SK-N-SH (cell line): ENCODE measurements at regions of chr22 and their contacts with region 1.

Region 1: DNA sequence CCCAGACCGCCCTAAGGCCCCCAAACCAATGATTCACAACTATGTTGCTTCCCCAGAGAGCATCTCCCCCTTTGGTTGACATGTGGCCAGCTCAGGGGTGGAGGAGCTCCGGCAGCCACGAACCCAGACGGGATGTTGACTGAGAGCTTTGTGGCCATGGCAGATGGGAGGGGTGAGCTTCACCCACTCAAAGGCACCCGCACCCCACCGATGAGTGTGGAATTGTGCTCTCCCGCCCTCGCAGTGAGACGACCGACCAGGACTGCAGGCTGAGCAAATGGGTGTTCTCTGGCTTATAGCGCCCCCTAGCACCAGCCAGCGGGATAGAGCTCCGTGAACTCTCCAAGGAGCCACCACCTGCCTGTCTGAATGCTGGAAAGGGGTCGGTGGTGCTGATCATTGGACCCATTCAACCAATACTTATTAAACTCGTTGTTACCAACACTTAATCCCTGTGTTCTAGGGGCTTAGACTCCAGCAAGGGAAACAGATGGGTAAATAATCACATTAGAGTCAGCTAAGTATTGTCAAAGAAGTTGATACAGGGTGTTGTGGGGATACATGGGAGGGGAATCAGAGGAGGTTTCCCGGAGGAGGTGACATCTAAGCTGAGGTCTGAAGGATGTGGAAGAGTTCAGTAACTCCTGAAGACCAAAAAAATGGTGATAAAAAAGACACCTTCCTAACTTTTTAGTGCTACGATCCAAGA is 4.5 kb upstream of the TIMP3 start:
- DNase-seq: peak; percentile 76
- H3K4me3 ChIP-seq: peak overlapping the region in 1 of 2 experiments; percentile 11; a peak in 1 of 4 replicates
- H3K27ac ChIP-seq: no peak overlapping the region
- H3K4me1 ChIP-seq: peaks cover 0 to 8% of the 10 kb centered on the region in 2 experiments; a peak in 1 of 4 replicates
- H3K27me3 ChIP-seq: no peaks in the 10 kb centered on the region
- CTCF ChIP-seq: peak; percentile 87
- EP300 ChIP-seq: no peak
- RAD21 ChIP-seq: peak; percentile 79

Region 2: GRCh38 chr22:32775957-32776356 is 21.1 kb before region 1 on chr22:
- CTCF ChIA-PET with region 1: interaction called, 36 read pairs
- POLR2A ChIA-PET with region 1: no interaction called
- DNase-seq: peak; percentile 43
- H3K4me3 ChIP-seq: no peak overlapping the region
- H3K27ac ChIP-seq: no peak overlapping the region
- H3K4me1 ChIP-seq: no peaks in the 10 kb centered on the region; a peak in 1 of 4 replicates
- H3K27me3 ChIP-seq: no peaks in the 10 kb centered on the region
- CTCF ChIP-seq: peak; percentile 32; the same call in 1 of the 2 replicates
- EP300 ChIP-seq: no peak
- RAD21 ChIP-seq: peak; percentile 56

Region 3: DNA sequence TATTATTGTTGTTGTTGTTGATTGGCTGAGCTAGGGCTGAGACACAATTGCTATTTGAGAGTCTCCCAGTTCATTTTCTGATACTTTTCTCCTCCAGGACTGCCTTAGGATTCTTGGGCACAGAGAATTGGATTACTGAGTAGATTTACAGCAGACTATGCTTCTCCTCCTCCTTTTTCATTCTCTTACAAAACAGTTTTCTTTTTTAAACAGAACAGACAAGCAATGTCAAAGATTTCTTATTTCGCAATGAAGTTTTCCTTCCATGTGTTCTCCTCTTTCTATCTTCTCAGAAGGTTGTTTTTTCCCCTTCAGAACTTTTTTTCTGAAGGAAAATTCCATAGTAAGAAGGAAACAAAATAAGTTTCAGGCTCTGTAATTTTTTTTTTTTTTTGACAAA is 15.3 kb before region 1 on chr22:
- CTCF ChIA-PET with region 1: interaction called, 36 read pairs
- POLR2A ChIA-PET with region 1: no interaction called
- DNase-seq: no peak
- H3K4me3 ChIP-seq: no peak overlapping the region
- H3K27ac ChIP-seq: no peak overlapping the region
- H3K4me1 ChIP-seq: peaks cover 0 to 4% of the 10 kb centered on the region in 2 experiments; a peak in 1 of 4 replicates
- H3K27me3 ChIP-seq: no peaks in the 10 kb centered on the region
- CTCF ChIP-seq: no peak
- EP300 ChIP-seq: no peak
- RAD21 ChIP-seq: no peak

Region 4: GRCh38 chr22:32810561-32811004 is 13.6 kb after region 1 on chr22:
- CTCF ChIA-PET with region 1: interaction called, 21 read pairs
- POLR2A ChIA-PET with region 1: no interaction called
- DNase-seq: no peak
- H3K4me3 ChIP-seq: no peak overlapping the region
- H3K27ac ChIP-seq: no peak overlapping the region
- H3K4me1 ChIP-seq: no peaks in the 10 kb centered on the region; a peak in 1 of 4 replicates
- H3K27me3 ChIP-seq: no peaks in the 10 kb centered on the region
- CTCF ChIP-seq: no peak
- EP300 ChIP-seq: no peak
- RAD21 ChIP-seq: no peak

Region 5: DNA sequence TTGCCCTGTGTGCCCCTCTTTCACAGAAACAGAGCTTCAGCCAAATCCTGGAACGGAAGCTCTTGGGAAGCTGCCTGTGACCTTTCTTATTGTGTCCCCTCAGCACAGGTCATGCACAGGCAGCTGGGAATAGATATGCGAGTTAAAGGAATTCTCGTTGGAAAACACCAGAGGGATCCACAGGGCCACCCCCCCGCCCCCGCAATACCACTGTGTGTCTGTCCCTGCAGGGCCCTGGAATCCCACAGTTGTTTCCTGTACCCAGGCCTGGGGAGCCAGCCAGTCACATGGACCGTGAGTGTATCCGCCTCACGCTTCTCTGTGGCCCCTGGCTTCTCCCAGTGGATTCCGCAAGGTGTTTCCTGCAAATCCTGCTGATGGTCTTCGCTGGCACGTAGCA is 33.5 kb after region 1 on chr22:
- CTCF ChIA-PET with region 1: interaction called, 18 read pairs
- POLR2A ChIA-PET with region 1: no interaction called
- DNase-seq: no peak
- H3K4me3 ChIP-seq: no peak overlapping the region
- H3K27ac ChIP-seq: no peak overlapping the region
- H3K4me1 ChIP-seq: peaks cover 0 to 6% of the 10 kb centered on the region in 2 experiments; a peak in 1 of 4 replicates
- H3K27me3 ChIP-seq: no peaks in the 10 kb centered on the region
- CTCF ChIP-seq: no peak
- EP300 ChIP-seq: no peak
- RAD21 ChIP-seq: no peak

Region 6: DNA sequence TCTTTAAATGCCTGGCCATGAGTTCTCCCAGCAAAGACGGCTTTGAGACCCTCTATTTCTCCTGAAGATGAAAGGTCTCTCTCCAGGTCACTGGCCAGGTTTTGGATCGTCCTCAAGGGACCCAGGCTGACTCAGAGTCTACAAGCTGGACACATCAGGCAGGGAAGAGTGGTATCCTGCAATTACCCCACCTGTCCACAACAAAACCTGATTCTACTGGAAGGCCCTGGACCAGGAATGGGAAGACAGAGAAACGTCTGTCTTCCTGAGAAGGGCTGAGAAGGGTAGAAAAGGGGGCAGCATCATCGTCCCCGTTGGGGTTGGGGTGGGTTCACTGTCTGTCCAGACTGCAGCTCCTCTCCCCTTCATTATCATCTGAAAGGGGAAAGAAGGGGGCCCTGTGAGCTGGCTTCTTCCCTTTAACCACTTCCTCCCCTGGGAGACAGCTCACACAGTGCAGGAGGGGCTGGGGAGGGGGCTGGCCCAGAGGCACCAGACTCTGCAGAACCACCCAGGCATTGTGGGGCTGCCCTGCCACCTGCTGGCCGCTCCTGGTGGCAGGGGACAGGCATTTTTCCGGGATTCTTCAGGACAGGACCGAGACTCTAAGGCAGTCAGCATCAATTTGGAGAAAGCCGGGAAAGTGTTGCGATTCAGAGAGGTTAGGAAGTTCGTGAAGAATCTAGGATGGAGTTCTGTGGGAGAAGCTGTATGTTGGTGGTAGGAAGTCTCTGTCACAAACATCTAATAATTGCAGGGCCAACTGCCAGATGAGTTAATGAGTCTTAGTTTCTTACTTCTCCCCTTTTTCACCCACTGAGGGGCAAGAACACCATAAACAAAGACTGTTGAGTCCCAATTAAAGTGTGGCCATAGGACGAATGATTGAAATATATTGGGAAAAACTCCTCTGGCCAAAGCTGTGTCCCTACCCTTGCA is 203.6 kb after region 1 on chr22:
- CTCF ChIA-PET with region 1: interaction called, 16 read pairs
- POLR2A ChIA-PET with region 1: interaction called, 3 read pairs
- DNase-seq: peak; percentile 82
- H3K4me3 ChIP-seq: no peak overlapping the region; a peak in 1 of 4 replicates
- H3K27ac ChIP-seq: no peak overlapping the region
- H3K4me1 ChIP-seq: no peaks in the 10 kb centered on the region; a peak in 1 of 4 replicates
- H3K27me3 ChIP-seq: no peaks in the 10 kb centered on the region
- CTCF ChIP-seq: peak; percentile 84
- EP300 ChIP-seq: no peak
- RAD21 ChIP-seq: peak; percentile 94